A549 (cell line): ENCODE measurements at regions of chr17 and their contacts with region 1.

Region 1: GRCh38 chr17:40450175-40450574 is 6.9 kb downstream of the IGFBP4 start:
- DNase-seq: peak; percentile 81 to 87
- ATAC-seq: peak; percentile 18 to 22; a peak in 3 of 6 replicates
- H3K4me3 ChIP-seq: peak overlapping the region; percentile 78
- H3K27ac ChIP-seq: peak overlapping the region; percentile 98
- H3K4me1 ChIP-seq: peaks cover 82% of the 10 kb centered on the region
- CTCF ChIP-seq: peak; percentile 76
- EP300 ChIP-seq: no peak
- POLR2A ChIP-seq: no peak
- RAD21 ChIP-seq: peak; percentile 47 to 54; a peak in 3 of 5 replicates

Region 2: GRCh38 chr17:40480501-40481003 is 30.4 kb after region 1 on chr17:
- CTCF ChIA-PET with region 1: interaction called, 120 read pairs
- POLR2A ChIA-PET with region 1: interaction called, 5 read pairs
- DNase-seq: peak; percentile 59 to 87
- ATAC-seq: peak; percentile 16 to 17
- H3K4me3 ChIP-seq: no peak overlapping the region
- H3K27ac ChIP-seq: peak overlapping the region; percentile 96 to 97
- H3K4me1 ChIP-seq: peaks cover 83% of the 10 kb centered on the region
- CTCF ChIP-seq: no peak
- EP300 ChIP-seq: peak; percentile 14 to 58; a peak in 1 of 5 replicates
- POLR2A ChIP-seq: no peak
- RAD21 ChIP-seq: no peak

Region 3: DNA sequence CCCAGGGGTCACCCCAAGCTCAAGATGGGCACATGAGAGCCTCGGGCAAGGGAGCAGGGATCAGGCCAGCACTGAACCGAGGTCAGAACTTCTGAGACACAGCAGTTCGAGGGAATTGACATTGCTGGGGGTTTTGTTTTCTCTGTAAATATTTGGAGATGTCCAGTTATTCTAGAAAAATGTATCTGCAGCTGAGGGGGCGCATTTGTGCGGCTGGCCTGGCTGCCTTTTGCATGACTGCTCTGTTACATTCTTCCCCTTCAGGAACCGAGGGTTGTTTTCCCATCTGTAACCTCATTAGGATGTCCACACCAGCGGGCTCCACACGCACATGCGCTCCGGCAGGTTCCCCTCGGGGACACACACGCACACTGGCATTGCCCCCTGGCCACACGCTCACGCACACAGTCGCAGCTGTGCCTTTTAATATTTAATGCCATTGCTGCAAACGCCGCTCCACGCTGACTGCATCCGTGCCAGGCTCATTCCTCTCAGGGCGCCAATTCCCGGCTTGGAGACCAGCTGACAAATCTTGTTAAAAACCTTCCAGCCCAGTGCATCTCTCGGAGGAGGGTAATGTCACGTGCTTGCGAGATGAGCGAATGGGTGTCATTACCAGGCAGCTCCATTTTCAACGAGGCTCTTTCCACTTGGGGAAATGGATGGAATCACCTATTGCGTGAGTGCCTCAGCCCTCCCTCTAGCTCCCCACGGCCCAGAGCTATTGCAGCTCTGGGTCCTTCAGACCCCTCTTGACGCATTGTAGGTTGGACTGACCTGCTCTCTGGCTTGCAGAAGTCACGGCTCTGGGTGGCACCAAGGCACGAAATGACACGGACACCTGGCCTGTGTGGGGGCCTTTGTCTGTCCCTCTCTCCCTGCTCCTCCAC is 101.9 kb after region 1 on chr17:
- CTCF ChIA-PET with region 1: interaction called, 169 read pairs
- POLR2A ChIA-PET with region 1: interaction called, 4 read pairs
- DNase-seq: peak; percentile 95 to 99
- ATAC-seq: peak; percentile 51 to 75
- H3K4me3 ChIP-seq: peak overlapping the region; percentile 17; the same call in 2 of the 3 replicates
- H3K27ac ChIP-seq: peak overlapping the region; percentile 95 to 99
- H3K4me1 ChIP-seq: peaks cover 84% of the 10 kb centered on the region
- CTCF ChIP-seq: no peak
- EP300 ChIP-seq: peak; percentile 100
- POLR2A ChIP-seq: no peak
- RAD21 ChIP-seq: peak; percentile 43 to 62